ENCODE measurements at regions of chr7 and their contacts with region 1.

Region 1: DNA sequence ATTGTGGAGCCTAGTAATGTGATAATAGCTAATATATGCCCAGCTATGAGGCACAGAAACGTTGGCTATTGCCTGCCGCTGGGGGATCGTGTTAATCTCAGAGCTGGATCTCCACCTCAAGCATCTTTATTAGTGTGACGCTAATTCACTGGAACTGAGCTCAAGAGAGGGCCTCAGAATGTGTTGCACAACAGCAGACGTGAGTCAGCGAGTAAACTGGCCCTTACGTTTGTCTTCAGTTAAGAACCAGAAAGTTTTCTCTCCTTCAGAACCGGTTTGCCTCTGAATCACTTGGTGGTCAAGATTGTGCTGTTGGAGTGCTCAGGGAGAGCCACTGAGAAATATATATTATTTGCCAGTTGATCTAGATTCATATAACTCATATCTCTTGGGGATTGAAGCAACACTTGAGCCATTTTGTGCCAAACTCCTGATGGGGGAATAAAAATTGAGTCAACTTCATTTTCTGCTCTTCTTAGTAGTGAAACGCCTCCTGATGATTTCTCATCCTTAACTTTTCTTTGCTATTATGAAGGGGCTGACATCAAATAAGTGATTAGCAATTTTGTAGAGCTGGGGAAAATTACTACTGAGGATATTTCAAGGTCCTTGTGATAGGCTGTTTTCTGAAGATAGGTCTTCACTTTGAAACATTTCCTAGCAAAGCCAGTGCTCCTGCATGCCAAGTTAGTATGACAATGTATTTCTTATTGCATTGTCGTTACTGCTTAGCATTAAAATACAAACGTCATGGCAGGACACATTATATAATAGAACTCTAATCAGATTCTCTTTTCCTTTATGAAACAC is 22.3 kb downstream of the BZW2 start:
- DNase-seq: peak; percentile 97
- H3K4me3 Mint-ChIP-seq: peak overlapping the region; percentile 47
- H3K27ac Mint-ChIP-seq: peak overlapping the region; percentile 95
- H3K4me1 Mint-ChIP-seq: peaks cover 30% of the 10 kb centered on the region
- H3K27me3 Mint-ChIP-seq: no peaks in the 10 kb centered on the region
- CTCF ChIP-seq: no peak

Region 2: GRCh38 chr7:16554518-16555236 is 113.6 kb before region 1 on chr7:
- CTCF ChIA-PET with region 1: no interaction called
- POLR2A ChIA-PET with region 1: no interaction called
- intact Hi-C with region 1: no loop called
- DNase-seq: no peak
- H3K4me3 Mint-ChIP-seq: no peak overlapping the region
- H3K27ac Mint-ChIP-seq: no peak overlapping the region
- H3K4me1 Mint-ChIP-seq: no peaks in the 10 kb centered on the region
- H3K27me3 Mint-ChIP-seq: peaks cover 22% of the 10 kb centered on the region
- CTCF ChIP-seq: no peak

Region 3: GRCh38 chr7:16645593-16646471 is 22.4 kb before region 1 on chr7 and contains the starts of genes ANKMY2 and BZW2:
- CTCF ChIA-PET with region 1: interaction called, 3 read pairs
- POLR2A ChIA-PET with region 1: interaction called, 106 read pairs
- intact Hi-C with region 1: loop called (anchors 1 kb)
- DNase-seq: peak; percentile 96
- H3K4me3 Mint-ChIP-seq: peak within 1 kb of the TSS; percentile 86
- H3K27ac Mint-ChIP-seq: peak within 1 kb of the TSS; percentile 97
- H3K4me1 Mint-ChIP-seq: peaks cover 38% of the 10 kb centered on the region
- H3K27me3 Mint-ChIP-seq: no peaks in the 10 kb centered on the region
- CTCF ChIP-seq: no peak
- total RNA-seq, gene ANKMY2: 14.3 and 15.3 TPM in 2 replicates
- total RNA-seq, gene BZW2: 41.0 and 85.4 TPM in 2 replicates

Region 4: GRCh38 chr7:16791071-16791470 is 122.8 kb after region 1 on chr7:
- CTCF ChIA-PET with region 1: no interaction called
- POLR2A ChIA-PET with region 1: no interaction called
- intact Hi-C with region 1: no loop called
- DNase-seq: no peak
- H3K4me3 Mint-ChIP-seq: no peak overlapping the region
- H3K27ac Mint-ChIP-seq: no peak overlapping the region
- H3K4me1 Mint-ChIP-seq: no peaks in the 10 kb centered on the region
- H3K27me3 Mint-ChIP-seq: no peaks in the 10 kb centered on the region
- CTCF ChIP-seq: no peak

Region 5: DNA sequence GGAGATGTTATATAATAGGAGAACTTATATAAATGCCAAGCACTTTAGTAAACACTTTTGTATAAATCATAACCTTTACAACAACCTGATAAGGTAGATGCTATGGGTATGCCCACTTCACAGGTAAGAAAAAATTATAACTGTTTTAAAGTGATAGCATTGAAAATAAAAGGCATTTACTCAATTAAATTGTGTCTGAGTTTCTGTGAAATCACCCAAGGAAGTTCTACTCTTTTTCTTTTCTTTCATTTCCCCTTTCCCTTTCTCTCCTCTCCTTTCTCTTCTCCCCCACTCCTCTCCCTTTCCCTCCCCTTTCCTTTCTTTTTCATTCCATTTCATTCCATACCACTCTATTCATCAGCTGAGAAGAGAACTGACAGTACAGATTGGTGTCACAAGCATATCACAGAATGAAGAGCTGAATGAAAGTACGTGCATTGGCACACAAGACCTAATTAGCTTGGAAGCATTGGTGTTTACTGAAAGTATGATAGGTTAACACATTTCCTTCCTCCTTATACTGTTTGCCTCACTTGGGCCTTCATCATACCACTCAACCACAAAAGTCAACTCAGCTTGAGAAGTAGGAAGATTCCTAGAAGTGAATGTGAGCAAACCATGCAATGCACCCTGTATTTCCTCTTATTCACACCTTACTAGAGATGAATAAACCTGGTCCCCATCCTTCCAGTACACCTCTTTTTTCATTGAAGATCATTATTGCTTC is 331.4 kb after region 1 on chr7:
- CTCF ChIA-PET with region 1: no interaction called
- POLR2A ChIA-PET with region 1: no interaction called
- intact Hi-C with region 1: no loop called
- DNase-seq: no peak
- H3K4me3 Mint-ChIP-seq: no peak overlapping the region
- H3K27ac Mint-ChIP-seq: no peak overlapping the region
- H3K4me1 Mint-ChIP-seq: no peaks in the 10 kb centered on the region
- H3K27me3 Mint-ChIP-seq: no peaks in the 10 kb centered on the region
- CTCF ChIP-seq: no peak